SK-N-SH (cell line): ENCODE measurements at regions of chr21 and their contacts with region 1.

Region 1: GRCh38 chr21:45596704-45597318 is 46.7 kb upstream of the PCBP3 start:
- DNase-seq: peak; percentile 87
- H3K4me3 ChIP-seq: no peak overlapping the region
- H3K27ac ChIP-seq: no peak overlapping the region
- H3K4me1 ChIP-seq: peaks cover 0 to 9% of the 10 kb centered on the region in 2 experiments; a peak in 1 of 4 replicates
- H3K27me3 ChIP-seq: no peaks in the 10 kb centered on the region
- CTCF ChIP-seq: peak; percentile 78
- EP300 ChIP-seq: no peak
- RAD21 ChIP-seq: peak; percentile 75

Region 2: DNA sequence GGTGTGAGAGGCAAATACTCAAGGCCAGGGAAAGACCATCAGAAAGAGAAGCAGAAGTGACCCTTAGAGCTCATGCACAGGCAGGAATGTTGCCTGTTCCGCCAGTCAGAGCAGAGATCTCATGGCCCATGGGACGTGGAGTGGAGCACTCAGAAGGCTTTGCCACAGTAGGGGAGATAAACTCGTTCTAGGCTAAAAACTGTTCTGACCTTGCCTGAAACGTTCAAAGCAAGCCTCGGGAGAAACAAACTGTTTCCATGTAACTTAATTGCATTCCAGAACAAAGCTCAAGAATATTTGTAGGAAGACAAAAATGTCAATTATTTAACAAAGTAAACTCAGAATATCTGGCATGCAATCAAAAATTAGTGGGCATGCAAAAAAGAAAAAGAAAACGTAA is 33.8 kb before region 1 on chr21:
- CTCF ChIA-PET with region 1: interaction called, 135 read pairs
- POLR2A ChIA-PET with region 1: no interaction called
- DNase-seq: no peak
- H3K4me3 ChIP-seq: no peak overlapping the region
- H3K27ac ChIP-seq: no peak overlapping the region
- H3K4me1 ChIP-seq: no peaks in the 10 kb centered on the region; a peak in 1 of 4 replicates
- H3K27me3 ChIP-seq: 0 out of 2 replicates have a peak, but pooled peaks cover 4% of the 10 kb centered on the region
- CTCF ChIP-seq: no peak
- EP300 ChIP-seq: no peak
- RAD21 ChIP-seq: no peak

Region 3: GRCh38 chr21:45570826-45571601 is 25.8 kb before region 1 on chr21:
- CTCF ChIA-PET with region 1: interaction called, 27 read pairs
- POLR2A ChIA-PET with region 1: no interaction called
- DNase-seq: peak; percentile 86
- H3K4me3 ChIP-seq: no peak overlapping the region
- H3K27ac ChIP-seq: peak overlapping the region in 1 of 2 experiments; percentile 96; a peak in 2 of 4 replicates
- H3K4me1 ChIP-seq: peaks cover 0 to 52% of the 10 kb centered on the region in 2 experiments; a peak in 2 of 4 replicates
- H3K27me3 ChIP-seq: 0 out of 2 replicates have a peak, but pooled peaks cover 5% of the 10 kb centered on the region
- CTCF ChIP-seq: no peak
- EP300 ChIP-seq: peak in 1 of 2 experiments; percentile 80; a peak in 2 of 4 replicates
- RAD21 ChIP-seq: no peak

Region 4: DNA sequence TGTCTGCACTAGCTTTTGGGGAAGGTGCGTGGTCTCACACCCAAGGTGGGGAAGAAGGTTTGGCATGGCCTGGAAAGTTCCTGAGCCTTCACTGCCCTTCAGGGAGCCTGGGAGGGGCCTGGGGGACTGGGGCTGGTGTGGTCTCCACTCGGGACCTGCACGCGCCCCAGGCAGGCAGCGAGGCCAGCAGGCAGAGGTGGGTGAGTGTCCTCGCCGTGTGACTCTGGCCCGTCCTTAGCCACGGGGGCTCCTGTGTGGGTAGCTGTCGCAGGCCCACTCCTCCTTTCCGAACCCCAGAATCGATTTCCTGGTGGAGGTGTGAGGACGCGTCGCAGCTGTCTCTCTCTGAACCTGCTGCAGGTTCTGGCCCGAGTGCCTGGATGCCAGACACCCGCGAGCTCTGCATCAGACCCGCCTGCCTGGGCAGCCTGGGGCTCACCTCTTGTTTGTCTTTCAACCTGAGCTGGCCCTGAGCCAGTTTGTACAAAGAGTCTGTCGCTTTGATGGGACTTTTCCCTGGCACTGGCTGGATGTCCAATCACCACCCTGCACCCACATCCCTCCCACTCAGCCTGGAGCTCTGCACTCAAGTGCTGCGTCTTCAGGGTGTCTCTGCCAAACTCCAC is 18.5 kb before region 1 on chr21:
- CTCF ChIA-PET with region 1: interaction called, 27 read pairs
- POLR2A ChIA-PET with region 1: no interaction called
- DNase-seq: peak; percentile 36
- H3K4me3 ChIP-seq: no peak overlapping the region
- H3K27ac ChIP-seq: no peak overlapping the region
- H3K4me1 ChIP-seq: peaks cover 0 to 52% of the 10 kb centered on the region in 2 experiments; a peak in 1 of 4 replicates
- H3K27me3 ChIP-seq: no peaks in the 10 kb centered on the region
- CTCF ChIP-seq: no peak
- EP300 ChIP-seq: no peak
- RAD21 ChIP-seq: no peak

Region 5: DNA sequence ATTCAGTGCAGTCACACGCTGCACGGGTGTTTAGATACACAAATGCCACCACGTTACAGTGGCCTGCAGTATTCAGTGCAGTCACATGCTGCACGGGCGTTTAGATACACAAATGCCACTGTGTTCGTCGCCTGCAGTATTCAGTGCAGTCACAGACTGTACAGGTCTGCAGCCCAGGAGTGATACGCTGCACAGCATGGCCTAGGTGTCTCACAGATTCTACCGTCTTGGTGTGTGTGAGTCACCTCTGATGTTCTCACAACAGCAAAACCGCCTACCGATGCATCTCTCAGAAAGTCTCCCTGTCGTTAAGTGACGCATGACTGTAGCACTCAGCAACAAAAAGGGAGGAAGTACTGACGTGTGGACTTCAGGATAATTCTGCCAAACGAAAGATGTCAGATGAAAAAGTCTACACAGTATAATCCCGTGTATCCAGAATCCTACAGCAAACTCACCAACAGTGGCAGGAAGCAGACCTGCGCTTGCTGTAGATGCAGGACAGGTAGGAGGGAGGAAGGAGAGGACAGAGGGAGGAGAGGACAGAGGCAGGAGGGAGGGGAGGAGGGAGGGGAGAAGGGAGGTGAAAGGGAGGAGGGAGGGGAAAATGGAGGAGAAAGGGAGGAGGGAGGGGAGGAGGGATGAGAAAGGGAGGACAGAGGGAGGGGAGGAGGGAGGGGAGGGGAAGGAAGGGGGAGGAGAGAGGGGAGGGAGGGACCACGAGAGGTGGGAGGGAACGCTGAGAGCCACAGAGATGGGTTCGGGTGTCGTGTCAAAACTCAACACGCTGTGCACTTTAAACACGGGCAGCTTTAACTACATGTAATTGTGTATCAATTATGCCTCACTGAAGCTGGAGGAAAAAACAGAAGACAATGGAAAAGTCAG is 10.5 kb after region 1 on chr21:
- CTCF ChIA-PET with region 1: interaction called, 17 read pairs
- POLR2A ChIA-PET with region 1: no interaction called
- DNase-seq: peak; percentile 63
- H3K4me3 ChIP-seq: peak overlapping the region; percentile 26 to 53; a peak in 3 of 4 replicates
- H3K27ac ChIP-seq: no peak overlapping the region
- H3K4me1 ChIP-seq: peaks cover 2 to 11% of the 10 kb centered on the region in 2 experiments; a peak in 2 of 4 replicates
- H3K27me3 ChIP-seq: peaks cover 19% of the 10 kb centered on the region
- CTCF ChIP-seq: no peak
- EP300 ChIP-seq: no peak
- RAD21 ChIP-seq: no peak

Region 6: DNA sequence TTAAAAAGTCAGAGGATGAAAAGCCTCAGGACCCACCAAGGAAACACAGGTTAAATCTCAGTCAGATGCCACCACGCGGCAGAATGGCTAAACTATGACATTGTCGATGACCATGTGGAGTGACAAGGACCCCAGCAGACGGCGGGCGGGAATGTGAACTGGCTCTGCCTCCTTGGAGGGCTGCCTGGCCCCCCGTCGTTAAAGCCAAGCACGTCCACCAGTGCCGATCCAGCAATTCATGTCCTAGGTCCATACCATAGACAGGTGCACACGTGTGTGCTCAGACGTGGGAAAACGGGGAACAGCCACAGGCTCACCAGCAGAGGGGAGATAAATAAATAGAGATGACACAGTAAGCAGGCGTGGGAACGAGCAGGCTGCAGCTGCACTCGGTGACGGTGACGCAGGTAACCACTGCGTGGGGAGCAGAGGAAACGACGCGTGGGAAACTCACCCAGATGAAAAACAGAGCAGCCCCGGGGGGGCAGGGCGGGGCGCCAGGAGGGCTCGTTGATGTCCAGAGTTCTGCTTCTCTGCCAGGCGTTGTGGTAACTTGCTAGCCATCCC is 18.4 kb after region 1 on chr21:
- CTCF ChIA-PET with region 1: interaction called, 12 read pairs
- POLR2A ChIA-PET with region 1: no interaction called
- DNase-seq: peak; percentile 72
- H3K4me3 ChIP-seq: peak overlapping the region in 1 of 2 experiments; percentile 2; a peak in 1 of 4 replicates
- H3K27ac ChIP-seq: no peak overlapping the region
- H3K4me1 ChIP-seq: peaks cover 7 to 29% of the 10 kb centered on the region in 2 experiments; a peak in 2 of 4 replicates
- H3K27me3 ChIP-seq: no peaks in the 10 kb centered on the region; the same call in 1 of the 2 replicates
- CTCF ChIP-seq: no peak
- EP300 ChIP-seq: no peak
- RAD21 ChIP-seq: peak; percentile 22; the same call in 1 of the 2 replicates

Region 7: DNA sequence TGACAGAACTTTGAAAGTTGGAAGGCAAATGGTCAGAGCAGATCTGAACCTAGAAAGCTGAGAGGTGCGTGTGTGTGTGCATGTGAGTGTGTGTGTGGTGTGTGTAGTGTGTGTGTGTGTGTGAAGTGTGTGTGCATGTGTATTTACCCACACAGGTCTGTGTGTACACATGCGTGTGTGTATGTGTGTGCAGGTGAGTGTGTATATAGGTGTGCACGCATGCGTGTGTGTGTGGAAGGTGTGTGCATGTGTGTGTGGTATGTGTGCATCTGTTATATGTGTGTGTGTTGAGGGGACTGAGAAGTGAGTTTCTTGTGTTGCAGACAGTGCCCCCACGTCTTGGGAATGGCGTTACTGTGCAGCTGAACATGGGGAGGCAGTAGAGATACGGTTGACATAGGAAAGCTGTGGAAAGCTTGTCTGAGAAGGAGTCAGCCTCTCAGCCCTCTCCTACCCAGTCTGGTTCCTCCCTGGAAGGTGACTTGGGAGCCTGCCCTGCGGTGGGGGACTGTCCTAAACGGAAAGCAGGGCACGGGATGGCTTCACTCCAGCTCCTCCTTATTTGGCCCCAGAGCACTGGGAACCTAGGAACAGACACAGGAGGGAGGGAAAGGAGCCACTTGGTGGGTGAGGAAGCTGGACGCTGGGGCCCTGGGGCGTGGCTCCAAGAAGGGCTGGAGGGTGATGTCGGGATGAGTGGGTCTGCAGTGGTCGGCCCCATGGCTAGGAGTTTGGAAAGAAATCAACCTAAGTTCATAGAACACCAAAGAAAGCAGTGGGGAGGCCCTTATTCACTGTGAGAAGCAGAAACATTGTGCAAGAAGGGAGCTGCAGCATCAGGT is 143.9 kb after region 1 on chr21:
- CTCF ChIA-PET with region 1: no interaction called
- POLR2A ChIA-PET with region 1: no interaction called
- DNase-seq: no peak
- H3K4me3 ChIP-seq: no peak overlapping the region
- H3K27ac ChIP-seq: no peak overlapping the region; a peak in 1 of 4 replicates
- H3K4me1 ChIP-seq: peaks cover 15 to 56% of the 10 kb centered on the region in 2 experiments; a peak in 3 of 4 replicates
- H3K27me3 ChIP-seq: no peaks in the 10 kb centered on the region
- CTCF ChIP-seq: no peak
- EP300 ChIP-seq: no peak
- RAD21 ChIP-seq: peak; percentile 23; the same call in 1 of the 2 replicates